ENCODE measurements at regions of chr5 and their contacts with region 1.

Region 1: DNA sequence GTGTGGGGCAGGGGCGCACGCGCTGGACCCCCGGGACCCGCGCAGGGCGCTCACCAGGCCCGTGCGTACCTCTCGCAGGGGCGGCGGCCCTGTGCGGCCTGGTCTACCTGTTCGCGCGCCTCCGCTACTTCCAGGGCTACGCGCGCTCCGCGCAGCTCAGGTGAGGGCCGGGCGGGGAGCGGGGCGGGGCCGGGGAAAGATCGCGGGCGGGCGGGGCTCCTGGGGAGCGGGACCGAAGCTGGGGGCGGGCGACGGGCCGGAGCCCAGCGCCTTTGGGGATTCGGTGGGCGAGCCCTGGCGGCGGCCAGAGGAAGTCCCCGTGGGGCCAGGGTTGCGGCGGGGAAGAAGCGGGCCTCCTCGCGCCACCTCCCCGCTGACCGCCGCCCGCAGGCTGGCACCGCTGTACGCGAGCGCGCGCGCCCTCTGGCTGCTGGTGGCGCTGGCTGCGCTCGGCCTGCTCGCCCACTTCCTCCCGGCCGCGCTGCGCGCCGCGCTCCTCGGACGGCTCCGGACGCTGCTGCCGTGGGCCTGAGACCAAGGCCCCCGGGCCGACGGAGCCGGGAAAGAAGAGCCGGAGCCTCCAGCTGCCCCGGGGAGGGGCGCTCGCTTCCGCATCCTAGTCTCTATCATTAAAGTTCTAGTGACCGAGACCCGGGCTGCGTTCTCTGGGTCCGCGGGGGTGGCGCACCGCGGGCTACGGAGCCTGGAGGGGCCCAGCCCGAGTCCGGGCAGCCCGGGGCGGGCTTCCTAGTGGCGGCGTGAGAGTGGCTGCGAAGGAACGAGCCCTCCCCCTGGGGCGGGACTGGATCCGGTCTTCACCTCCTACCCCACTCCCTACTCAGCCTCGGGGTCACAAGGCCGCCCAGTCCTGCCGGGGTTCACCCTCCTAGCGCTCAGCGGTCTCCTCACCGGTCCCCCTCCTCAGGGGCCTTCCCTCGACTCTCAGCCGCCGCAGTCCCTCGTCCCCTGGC is 2.4 kb downstream of the LTC4S start:
- DNase-seq: no peak
- H3K4me3 ChIP-seq: peak overlapping the region; percentile 64
- CTCF ChIP-seq: peak; percentile 73

Region 2: DNA sequence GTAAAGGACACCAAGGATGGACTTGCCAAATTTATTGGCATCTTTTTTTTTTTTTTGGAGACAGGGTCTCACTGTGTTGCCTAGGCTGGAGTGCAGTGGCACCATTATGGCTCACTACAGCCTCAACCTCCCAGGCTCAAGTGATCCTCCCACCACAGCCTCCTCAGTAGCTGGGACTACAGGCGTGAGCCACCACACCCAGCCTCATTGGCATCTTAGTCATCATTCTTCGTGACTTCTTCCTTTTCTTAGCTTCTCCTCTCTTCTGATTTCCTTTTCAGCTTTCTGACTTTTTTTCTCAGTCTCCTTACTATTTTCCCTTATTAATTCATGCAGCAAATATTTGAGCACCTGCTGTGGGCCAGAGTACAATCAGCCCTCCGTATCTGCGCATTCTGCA is 57.4 kb before region 1 on chr5:
- CTCF ChIA-PET with region 1: interaction called, 11 read pairs
- POLR2A ChIA-PET with region 1: no interaction called
- DNase-seq: no peak
- H3K4me3 ChIP-seq: no peak overlapping the region
- CTCF ChIP-seq: no peak

Region 3: GRCh38 chr5:179780362-179780761 is 15.8 kb before region 1 on chr5:
- CTCF ChIA-PET with region 1: interaction called, 12 read pairs
- POLR2A ChIA-PET with region 1: interaction called, 3 read pairs
- DNase-seq: no peak
- H3K4me3 ChIP-seq: no peak overlapping the region
- CTCF ChIP-seq: no peak

Region 4: DNA sequence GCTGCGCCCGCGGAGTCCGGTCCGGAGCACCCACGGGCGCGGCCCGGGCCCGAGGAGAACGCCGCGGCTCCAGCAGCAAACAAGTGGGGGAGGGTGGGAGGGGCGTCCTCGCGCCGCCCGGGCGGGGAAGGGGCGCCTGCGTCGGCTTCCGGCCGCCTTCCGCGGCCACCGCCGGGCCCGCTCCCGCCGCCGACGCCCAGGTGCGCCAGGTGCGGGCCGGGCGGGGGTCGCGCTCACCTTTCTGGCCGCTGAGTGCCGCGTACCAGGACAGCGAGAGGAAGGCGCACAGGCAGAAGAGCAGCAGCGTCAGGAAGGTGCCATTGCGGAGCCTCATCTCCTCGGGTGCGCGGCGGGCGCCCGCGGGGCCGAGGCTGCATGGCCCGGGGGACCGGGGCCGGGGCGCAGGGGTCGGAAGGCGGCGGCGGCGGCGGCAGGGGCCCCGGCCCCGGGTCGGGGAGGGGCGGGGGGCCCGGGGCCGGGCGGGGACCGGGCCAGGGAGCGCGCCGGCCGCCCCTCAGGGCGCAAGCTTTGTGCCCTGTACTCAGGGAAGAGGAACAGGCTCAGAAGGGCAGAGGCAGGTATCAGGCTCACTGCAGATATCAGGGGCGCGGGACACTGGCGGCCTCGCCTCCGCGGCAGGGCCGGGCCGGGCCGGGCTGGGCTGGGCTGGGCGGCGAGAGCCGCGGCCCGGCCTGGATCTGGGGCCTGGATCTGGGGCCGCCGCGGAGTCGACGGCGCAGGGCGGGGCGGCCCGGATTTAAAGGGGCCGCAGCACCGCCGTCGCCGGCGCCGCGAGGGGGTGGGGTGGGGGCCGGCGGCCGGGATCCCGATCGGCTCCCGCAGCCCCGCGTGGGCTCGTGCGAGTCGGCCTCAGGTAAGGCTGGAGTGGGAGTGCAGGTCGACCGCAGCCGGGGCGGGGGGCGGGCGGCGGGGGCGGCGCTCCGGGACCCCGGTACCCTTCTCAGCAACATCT is 10.4 kb after region 1 on chr5 and contains the start of gene MGAT4B:
- CTCF ChIA-PET with region 1: interaction called, 29 read pairs
- POLR2A ChIA-PET with region 1: interaction called, 3 read pairs
- DNase-seq: no peak
- H3K4me3 ChIP-seq: peak within 1 kb of the TSS; percentile 72
- CTCF ChIP-seq: no peak

Measured in AG04449 (cell line).